A673 (cell line): ENCODE measurements at regions of chr3 and their contacts with region 1.

Region 1: DNA sequence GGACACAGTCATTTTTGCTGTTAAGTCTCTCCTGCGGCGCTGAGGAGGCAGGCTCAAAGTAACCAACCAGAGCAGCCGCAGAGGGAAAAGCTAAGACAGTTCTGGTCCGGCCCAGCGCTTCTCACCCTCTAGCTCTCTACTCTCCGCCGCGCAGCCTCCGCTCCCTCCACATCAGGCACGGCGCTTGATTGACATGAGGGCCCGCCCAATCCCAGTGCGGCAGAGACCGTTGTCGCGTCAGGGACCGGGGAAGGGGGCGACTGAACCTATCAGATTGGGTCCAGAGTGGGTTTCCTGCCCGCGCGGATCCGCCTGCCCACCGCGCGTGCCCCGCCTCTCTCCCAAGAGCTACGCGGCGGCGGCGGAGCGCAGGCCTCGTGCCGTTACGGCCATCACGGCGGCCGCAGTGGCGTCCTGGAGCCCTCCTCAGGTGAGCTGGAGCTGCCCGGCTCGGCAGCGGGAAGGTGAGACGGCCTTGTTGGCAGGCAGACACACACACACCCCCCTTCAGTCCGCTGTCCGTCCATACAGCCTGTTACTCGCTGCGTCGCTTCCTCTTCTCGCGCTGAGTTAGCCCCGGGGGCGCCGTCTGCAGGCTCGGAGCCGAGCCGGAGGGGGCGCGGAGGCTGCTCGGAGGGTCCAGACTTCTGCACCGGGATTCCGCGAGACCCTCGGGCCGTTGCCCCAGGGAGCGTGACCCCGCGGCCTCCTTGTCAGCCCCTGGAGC is at the start of gene NCK1:
- DNase-seq: peak; percentile 99
- H3K4me3 ChIP-seq: peak within 1 kb of the TSS; percentile 84
- H3K27ac ChIP-seq: peak within 1 kb of the TSS; percentile 92
- H3K4me1 ChIP-seq: peaks cover 3% of the 10 kb centered on the region
- H3K27me3 ChIP-seq: no peaks in the 10 kb centered on the region
- CTCF ChIP-seq: peak; percentile 45
- total RNA-seq, gene NCK1: 43.7 and 50.2 TPM in 2 replicates

Region 2: DNA sequence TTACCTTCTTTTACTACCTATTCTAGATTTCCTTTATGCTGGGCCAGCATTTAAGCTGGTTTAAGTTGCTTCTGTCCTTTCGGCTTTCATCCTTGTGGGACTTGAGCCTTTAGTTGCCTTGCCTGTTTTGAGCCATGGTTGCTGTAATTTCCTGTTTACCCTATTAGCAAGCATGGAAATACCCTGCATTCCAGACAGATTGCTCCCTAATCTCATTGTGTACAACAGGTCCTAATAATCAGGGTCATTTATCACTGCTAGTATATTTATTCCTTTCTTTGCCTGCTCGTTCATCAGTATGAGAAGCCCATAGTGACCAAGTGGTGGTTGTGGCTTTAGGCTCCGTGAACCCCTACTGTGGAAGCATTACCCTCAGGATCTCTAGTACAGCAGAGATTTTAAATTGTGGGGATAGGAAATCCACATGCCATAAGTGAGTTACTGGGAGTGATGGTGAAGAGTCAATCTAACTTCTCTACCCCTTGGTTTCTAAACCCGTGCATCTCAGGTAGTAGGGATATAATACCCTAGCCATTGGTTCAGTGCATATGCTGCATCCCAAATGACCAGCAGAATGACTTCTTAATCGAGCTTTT is 31.9 kb after region 1 on chr3:
- CTCF ChIA-PET with region 1: no interaction called
- POLR2A ChIA-PET with region 1: no interaction called
- intact Hi-C with region 1: no loop called
- DNase-seq: peak; percentile 57
- H3K4me3 ChIP-seq: no peak overlapping the region
- H3K27ac ChIP-seq: no peak overlapping the region
- H3K4me1 ChIP-seq: peaks cover 13% of the 10 kb centered on the region
- H3K27me3 ChIP-seq: no peaks in the 10 kb centered on the region
- CTCF ChIP-seq: no peak

Region 3: GRCh38 chr3:136938334-136938733 is 76.3 kb after region 1 on chr3:
- CTCF ChIA-PET with region 1: no interaction called
- POLR2A ChIA-PET with region 1: no interaction called
- intact Hi-C with region 1: loop called (anchors 5 kb)
- DNase-seq: peak; percentile 45
- H3K4me3 ChIP-seq: no peak overlapping the region
- H3K27ac ChIP-seq: peak overlapping the region; percentile 1
- H3K4me1 ChIP-seq: peaks cover 36% of the 10 kb centered on the region
- H3K27me3 ChIP-seq: no peaks in the 10 kb centered on the region
- CTCF ChIP-seq: no peak

Region 4: GRCh38 chr3:137050281-137050680 is 188.2 kb after region 1 on chr3:
- CTCF ChIA-PET with region 1: no interaction called
- POLR2A ChIA-PET with region 1: no interaction called
- intact Hi-C with region 1: no loop called
- DNase-seq: no peak
- H3K4me3 ChIP-seq: no peak overlapping the region
- H3K27ac ChIP-seq: no peak overlapping the region
- H3K4me1 ChIP-seq: no peaks in the 10 kb centered on the region
- H3K27me3 ChIP-seq: no peaks in the 10 kb centered on the region
- CTCF ChIP-seq: no peak

Region 5: GRCh38 chr3:137191133-137191923 is 329.3 kb after region 1 on chr3:
- CTCF ChIA-PET with region 1: no interaction called
- POLR2A ChIA-PET with region 1: no interaction called
- intact Hi-C with region 1: no loop called
- DNase-seq: no peak
- H3K4me3 ChIP-seq: no peak overlapping the region
- H3K27ac ChIP-seq: no peak overlapping the region
- H3K4me1 ChIP-seq: no peaks in the 10 kb centered on the region
- H3K27me3 ChIP-seq: peaks cover 10% of the 10 kb centered on the region
- CTCF ChIP-seq: no peak